CD4-positive, alpha-beta memory T cell (primary cell): ENCODE measurements at regions of chr5 and their contacts with region 1.

Region 1: DNA sequence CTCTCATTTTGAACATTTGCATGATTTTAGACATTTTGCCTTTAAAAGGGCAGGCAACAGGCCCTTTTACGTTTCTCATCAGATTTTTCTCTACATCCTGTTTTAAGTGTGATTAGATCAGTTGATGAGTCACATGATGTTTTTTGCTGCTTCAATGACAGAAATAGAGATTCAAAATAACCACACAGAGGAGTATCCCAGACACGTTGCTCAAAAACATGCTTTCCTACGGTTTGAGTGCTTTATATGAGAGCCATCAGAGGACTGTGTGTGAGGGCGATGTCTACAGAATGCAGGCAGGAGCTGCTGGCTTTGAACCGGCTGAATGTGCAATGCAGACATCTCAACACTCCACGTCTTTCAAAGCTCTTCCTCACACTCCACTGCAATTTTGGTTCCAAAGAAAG is 42.1 kb downstream of the OTULIN start:
- DNase-seq: peak; percentile 67 to 80 (median 73)
- H3K4me3 ChIP-seq: peak overlapping the region in 1 of 2 donors; percentile 26
- H3K4me3 Mint-ChIP-seq: peak overlapping the region; percentile 81 to 90 (median 82)
- H3K27ac ChIP-seq: peak overlapping the region; percentile 49
- H3K27ac Mint-ChIP-seq: peak overlapping the region; percentile 94 to 99 (median 99)
- H3K4me1 ChIP-seq: peaks cover 76% of the 10 kb centered on the region
- H3K4me1 Mint-ChIP-seq: peaks cover 66 to 91% (median 80%) of the 10 kb centered on the region in 4 donors
- H3K27me3 ChIP-seq: no peaks in the 10 kb centered on the region
- H3K27me3 Mint-ChIP-seq: no peaks in the 10 kb centered on the region

Region 2: DNA sequence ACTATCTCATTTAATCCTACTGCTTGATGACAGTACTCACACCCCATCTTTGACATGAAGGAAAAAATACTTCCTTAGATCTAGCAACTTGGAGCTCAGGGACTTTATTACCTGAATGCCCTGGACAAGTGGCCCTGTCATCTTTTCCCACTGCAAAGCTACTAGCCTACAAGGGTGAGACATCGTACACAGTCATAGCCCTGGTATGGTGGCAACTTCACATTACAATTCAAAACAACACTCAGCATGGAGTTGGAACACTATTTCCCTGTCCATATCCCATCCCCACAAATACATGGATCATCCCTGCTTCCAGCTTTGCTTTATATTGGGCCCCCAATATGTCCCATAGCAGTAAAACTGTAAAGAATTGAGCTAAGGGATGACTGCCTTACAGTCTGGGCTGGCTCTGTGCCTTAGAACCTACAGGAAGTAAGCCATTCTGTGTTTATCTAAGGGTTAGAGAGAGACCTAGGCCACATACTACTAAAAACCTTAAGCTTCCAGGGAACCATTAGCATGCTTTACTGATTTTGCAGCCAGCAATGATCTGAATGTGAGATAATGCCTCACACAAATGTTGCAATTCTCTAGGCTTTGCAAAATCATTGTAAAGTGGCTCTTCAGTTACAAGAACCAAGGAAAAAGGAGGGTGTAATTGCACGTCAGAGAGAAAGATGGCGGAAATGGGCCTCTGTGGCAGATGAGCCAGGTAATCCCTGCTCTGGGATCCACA is 13.8 kb after region 1 on chr5:
- CTCF ChIA-PET with region 1: interaction called, 64 read pairs
- POLR2A ChIA-PET with region 1: interaction called, 13 read pairs
- intact Hi-C with region 1: no loop called
- DNase-seq: no peak
- H3K4me3 ChIP-seq: no peak overlapping the region
- H3K4me3 Mint-ChIP-seq: no peak overlapping the region
- H3K27ac ChIP-seq: no peak overlapping the region
- H3K27ac Mint-ChIP-seq: peak overlapping the region; percentile 41 to 84 (median 68)
- H3K4me1 ChIP-seq: peaks cover 14% of the 10 kb centered on the region
- H3K4me1 Mint-ChIP-seq: peaks cover 15 to 37% (median 22%) of the 10 kb centered on the region in 4 donors
- H3K27me3 ChIP-seq: no peaks in the 10 kb centered on the region
- H3K27me3 Mint-ChIP-seq: no peaks in the 10 kb centered on the region

Region 3: DNA sequence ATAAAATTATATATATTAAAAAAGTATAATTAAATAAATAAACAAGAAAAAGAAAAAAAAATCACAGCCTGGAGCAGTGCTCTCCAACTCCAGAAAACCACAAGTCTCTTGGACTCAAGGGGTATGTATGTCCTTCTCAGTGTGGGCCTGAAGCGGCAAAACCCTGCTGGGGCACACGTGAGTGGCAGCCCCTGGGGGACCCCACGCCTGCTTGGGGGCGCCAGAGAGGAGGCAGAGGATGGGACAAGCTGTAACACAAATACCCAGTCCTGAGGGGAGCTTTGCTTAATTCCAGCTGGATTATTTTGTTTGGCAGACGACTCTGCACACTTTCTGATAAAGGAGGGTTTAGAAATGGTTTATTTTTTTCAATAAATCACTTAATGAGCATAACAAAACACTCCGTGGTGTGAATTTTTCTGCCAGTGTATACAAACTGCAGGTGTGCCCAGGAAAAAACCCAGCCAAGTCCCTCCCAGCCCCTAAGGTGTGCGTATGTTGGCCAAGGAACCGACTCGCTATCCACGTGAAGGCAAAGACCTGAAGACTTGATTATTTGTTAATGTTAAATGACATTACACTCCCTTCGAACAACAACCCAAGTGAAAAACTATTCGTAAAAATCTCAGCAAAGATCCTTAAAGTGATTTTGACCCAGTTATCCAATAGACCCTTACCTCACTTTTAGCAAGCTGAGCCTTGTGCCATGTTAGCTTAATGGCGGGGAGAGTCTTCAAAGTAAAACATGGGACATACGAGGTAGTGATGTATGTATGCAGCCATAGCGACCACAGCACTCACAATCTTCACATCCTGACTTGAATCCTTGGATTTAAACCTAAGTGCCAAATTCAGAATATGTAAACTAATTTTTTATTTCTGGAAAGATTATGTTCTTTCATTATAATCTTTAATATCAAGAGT is 132.0 kb after region 1 on chr5:
- CTCF ChIA-PET with region 1: no interaction called
- POLR2A ChIA-PET with region 1: no interaction called
- intact Hi-C with region 1: no loop called
- DNase-seq: no peak
- H3K4me3 ChIP-seq: no peak overlapping the region
- H3K4me3 Mint-ChIP-seq: no peak overlapping the region
- H3K27ac ChIP-seq: no peak overlapping the region
- H3K27ac Mint-ChIP-seq: no peak overlapping the region
- H3K4me1 ChIP-seq: peaks cover 1% of the 10 kb centered on the region
- H3K4me1 Mint-ChIP-seq: peaks cover 16 to 51% (median 30%) of the 10 kb centered on the region in 4 donors
- H3K27me3 ChIP-seq: no peaks in the 10 kb centered on the region
- H3K27me3 Mint-ChIP-seq: no peaks in the 10 kb centered on the region

Region 4: DNA sequence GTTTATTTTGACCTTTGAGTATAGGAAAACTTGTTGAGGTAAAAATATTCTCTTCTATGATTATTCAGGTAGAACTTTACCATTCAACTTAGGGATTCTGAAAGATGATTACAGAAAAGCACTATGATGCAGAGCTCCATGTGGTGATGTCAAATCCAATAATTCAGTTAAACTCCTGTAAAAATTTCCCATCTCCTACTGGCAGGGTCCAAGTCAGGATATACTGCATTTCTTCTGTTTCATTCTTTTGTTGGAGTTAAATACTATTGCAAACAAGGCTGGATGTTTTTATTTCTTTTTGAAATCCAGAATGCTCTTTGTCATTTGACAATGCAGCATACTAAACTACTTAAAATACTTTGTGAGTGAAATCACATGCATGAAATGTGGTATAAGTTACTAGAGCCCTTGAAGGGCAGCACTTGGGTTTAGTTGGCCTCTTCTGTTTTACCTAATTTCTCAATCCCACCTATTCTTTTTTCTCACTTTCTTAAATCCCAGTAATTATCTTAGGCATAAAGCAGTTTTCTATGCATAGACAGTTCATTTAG is 997.9 kb after region 1 on chr5:
- CTCF ChIA-PET with region 1: no interaction called
- POLR2A ChIA-PET with region 1: no interaction called
- intact Hi-C with region 1: no loop called
- DNase-seq: no peak
- H3K4me3 ChIP-seq: no peak overlapping the region
- H3K4me3 Mint-ChIP-seq: no peak overlapping the region
- H3K27ac ChIP-seq: no peak overlapping the region
- H3K27ac Mint-ChIP-seq: no peak overlapping the region
- H3K4me1 ChIP-seq: no peaks in the 10 kb centered on the region
- H3K4me1 Mint-ChIP-seq: no peaks in the 10 kb centered on the region
- H3K27me3 ChIP-seq: no peaks in the 10 kb centered on the region
- H3K27me3 Mint-ChIP-seq: no peaks in the 10 kb centered on the region